Activated CD4-positive, alpha-beta T cell treated with anti-CD3 and anti-CD28 coated beads for 36 hours (primary cell): ENCODE measurements at regions of chr10 and their contacts with region 1.

Region 1: DNA sequence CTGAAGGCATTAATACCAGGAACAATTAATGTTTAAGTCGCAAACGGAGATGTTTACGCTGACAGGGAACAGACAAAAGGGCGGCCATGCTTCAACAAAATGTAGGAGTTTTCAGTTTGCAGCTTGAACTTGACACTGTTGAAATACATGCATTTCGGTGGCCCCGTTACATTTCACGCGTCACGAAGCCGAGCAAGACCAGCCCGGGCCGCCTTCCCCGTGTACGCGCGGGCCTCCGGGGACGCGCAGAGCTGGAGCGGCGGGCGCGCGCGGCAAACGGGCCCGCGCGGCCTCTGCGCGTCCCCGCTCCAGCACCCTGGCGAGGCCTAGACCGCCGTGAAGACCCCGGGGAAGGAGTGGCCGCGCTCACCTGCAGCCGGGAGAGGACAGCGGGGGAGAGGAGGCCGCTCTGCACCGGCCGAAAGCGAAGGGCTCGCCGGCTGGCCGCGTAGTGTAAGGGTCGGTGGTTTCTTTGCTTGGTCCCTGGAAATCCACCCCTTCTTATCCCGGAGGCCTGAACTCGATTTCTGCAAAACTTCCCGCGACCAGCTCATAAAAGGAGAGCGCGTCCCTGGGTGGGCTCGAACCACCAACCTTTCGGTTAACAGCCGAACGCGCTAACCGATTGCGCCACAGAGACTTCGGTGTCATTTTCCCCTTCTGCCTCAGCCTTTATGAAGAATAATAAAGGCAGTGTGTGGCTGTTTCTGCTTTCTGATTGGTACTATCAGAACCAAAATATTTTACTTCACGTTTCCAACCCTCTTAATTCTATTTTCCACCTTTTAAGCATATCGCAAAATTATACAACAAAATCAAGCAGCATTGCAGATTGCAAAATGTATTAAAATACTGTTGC is 11.4 kb upstream of the EBLN1 start:
- DNase-seq: peak; percentile 92
- ATAC-seq: peak; percentile 75
- H3K4me3 Mint-ChIP-seq: peak overlapping the region; percentile 89
- H3K27ac Mint-ChIP-seq: peak overlapping the region; percentile 90
- H3K4me1 Mint-ChIP-seq: peaks cover 20% of the 10 kb centered on the region
- H3K27me3 Mint-ChIP-seq: no peaks in the 10 kb centered on the region

Region 2: GRCh38 chr10:21525367-21526183 is 703.6 kb before region 1 on chr10 and contains the start of gene SKIDA1:
- CTCF ChIA-PET with region 1: no interaction called
- POLR2A ChIA-PET with region 1: interaction called, 3 read pairs
- intact Hi-C with region 1: loop called (anchors 2 to 10 kb)
- DNase-seq: peak; percentile 81
- ATAC-seq: peak; percentile 71
- H3K4me3 Mint-ChIP-seq: peak within 1 kb of the TSS; percentile 80
- H3K27ac Mint-ChIP-seq: peak within 1 kb of the TSS; percentile 96
- H3K4me1 Mint-ChIP-seq: peaks cover 24% of the 10 kb centered on the region
- H3K27me3 Mint-ChIP-seq: peaks cover 17% of the 10 kb centered on the region
- total RNA-seq, gene SKIDA1: 0.32 to 0.54 TPM

Region 3: GRCh38 chr10:22244001-22244400 is 14.8 kb after region 1 on chr10:
- CTCF ChIA-PET with region 1: interaction called, 16 read pairs
- POLR2A ChIA-PET with region 1: no interaction called
- intact Hi-C with region 1: loop called (anchors 1 kb)
- DNase-seq: peak; percentile 27
- ATAC-seq: no peak
- H3K4me3 Mint-ChIP-seq: no peak overlapping the region
- H3K27ac Mint-ChIP-seq: no peak overlapping the region
- H3K4me1 Mint-ChIP-seq: peaks cover 43% of the 10 kb centered on the region
- H3K27me3 Mint-ChIP-seq: peaks cover 3% of the 10 kb centered on the region

Region 4: GRCh38 chr10:22316285-22317120 is 87.3 kb after region 1 on chr10 and contains the start of gene COMMD3:
- CTCF ChIA-PET with region 1: interaction called, 4 read pairs
- POLR2A ChIA-PET with region 1: interaction called, 5 read pairs
- intact Hi-C with region 1: loop called (anchors 1 to 2 kb)
- DNase-seq: peak; percentile 88
- ATAC-seq: peak; percentile 72
- H3K4me3 Mint-ChIP-seq: peak within 1 kb of the TSS; percentile 94
- H3K27ac Mint-ChIP-seq: peak within 1 kb of the TSS; percentile 97
- H3K4me1 Mint-ChIP-seq: peaks cover 38% of the 10 kb centered on the region
- H3K27me3 Mint-ChIP-seq: peaks cover 7% of the 10 kb centered on the region
- total RNA-seq, gene COMMD3: 53.8 to 77.1 TPM

Region 5: GRCh38 chr10:23095404-23095965 is 866.3 kb after region 1 on chr10 and contains the start of gene MSRB2:
- CTCF ChIA-PET with region 1: no interaction called
- POLR2A ChIA-PET with region 1: no interaction called
- intact Hi-C with region 1: loop called in 1 of 2 experiments (anchors 5 kb)
- DNase-seq: peak; percentile 84
- ATAC-seq: peak; percentile 58
- H3K4me3 Mint-ChIP-seq: peak within 1 kb of the TSS; percentile 95
- H3K27ac Mint-ChIP-seq: peak within 1 kb of the TSS; percentile 92
- H3K4me1 Mint-ChIP-seq: peaks cover 39% of the 10 kb centered on the region
- H3K27me3 Mint-ChIP-seq: no peaks in the 10 kb centered on the region
- total RNA-seq, gene MSRB2: 8.2 to 9.0 TPM